Caco-2 (cell line): ENCODE measurements at regions of chr2 and their contacts with region 1.

Region 1: GRCh38 chr2:19667085-19667484 is 234.7 kb downstream of the TTC32 start:
- DNase-seq: peak in 1 of 2 experiments; percentile 18
- H3K4me3 ChIP-seq: no peak overlapping the region
- H3K4me3 Mint-ChIP-seq: no peak overlapping the region
- H3K27ac Mint-ChIP-seq: no peak overlapping the region
- H3K4me1 ChIP-seq: no peaks in the 10 kb centered on the region
- H3K4me1 Mint-ChIP-seq: no peaks in the 10 kb centered on the region
- H3K27me3 ChIP-seq: no peaks in the 10 kb centered on the region
- H3K27me3 Mint-ChIP-seq: no peaks in the 10 kb centered on the region
- CTCF ChIP-seq: peak; percentile 20 to 24

Region 2: GRCh38 chr2:19369341-19369955 is 297.6 kb before region 1 on chr2:
- CTCF ChIA-PET with region 1: interaction called, 3 read pairs
- POLR2A ChIA-PET with region 1: interaction called, 3 read pairs
- intact Hi-C with region 1: loop called (anchors 1 kb)
- DNase-seq: no peak
- H3K4me3 ChIP-seq: no peak overlapping the region
- H3K4me3 Mint-ChIP-seq: no peak overlapping the region
- H3K27ac Mint-ChIP-seq: no peak overlapping the region
- H3K4me1 ChIP-seq: no peaks in the 10 kb centered on the region
- H3K4me1 Mint-ChIP-seq: no peaks in the 10 kb centered on the region
- H3K27me3 ChIP-seq: no peaks in the 10 kb centered on the region
- H3K27me3 Mint-ChIP-seq: peaks cover 21% of the 10 kb centered on the region
- CTCF ChIP-seq: peak in 1 of 2 experiments; percentile 12

Region 3: DNA sequence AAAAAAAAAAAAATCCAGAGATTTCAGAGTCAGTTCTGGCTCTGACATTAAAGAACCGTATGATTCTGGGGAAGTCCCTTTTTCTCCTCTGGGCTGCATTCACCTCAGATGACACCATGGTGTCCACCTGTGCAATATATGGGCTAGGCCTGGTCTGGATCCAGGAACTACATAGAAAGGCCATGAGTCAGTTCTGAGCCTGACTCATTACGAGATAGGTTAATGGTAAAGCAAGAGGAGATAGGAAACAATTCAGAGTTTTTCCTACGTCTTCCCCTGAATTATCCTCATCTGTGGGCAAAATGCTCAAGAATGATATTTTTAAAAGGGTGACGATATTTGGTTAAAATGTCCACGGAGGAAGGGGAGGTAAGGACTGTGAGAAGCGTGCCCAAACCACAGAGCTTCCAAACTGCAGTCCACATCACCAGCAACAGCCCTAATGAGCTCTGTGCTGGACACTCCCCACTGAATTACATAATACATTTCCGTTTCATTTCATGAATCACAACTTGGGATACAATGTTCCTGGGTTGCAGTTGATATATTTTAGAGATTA is 128.6 kb before region 1 on chr2:
- CTCF ChIA-PET with region 1: interaction called, 3 read pairs
- POLR2A ChIA-PET with region 1: no interaction called
- intact Hi-C with region 1: loop called (anchors 5 kb)
- DNase-seq: peak; percentile 14 to 47
- H3K4me3 ChIP-seq: no peak overlapping the region
- H3K4me3 Mint-ChIP-seq: no peak overlapping the region
- H3K27ac Mint-ChIP-seq: no peak overlapping the region
- H3K4me1 ChIP-seq: peaks cover 6% of the 10 kb centered on the region; the same call in 1 of the 2 replicates
- H3K4me1 Mint-ChIP-seq: no peaks in the 10 kb centered on the region
- H3K27me3 ChIP-seq: no peaks in the 10 kb centered on the region
- H3K27me3 Mint-ChIP-seq: no peaks in the 10 kb centered on the region
- CTCF ChIP-seq: no peak

Region 4: DNA sequence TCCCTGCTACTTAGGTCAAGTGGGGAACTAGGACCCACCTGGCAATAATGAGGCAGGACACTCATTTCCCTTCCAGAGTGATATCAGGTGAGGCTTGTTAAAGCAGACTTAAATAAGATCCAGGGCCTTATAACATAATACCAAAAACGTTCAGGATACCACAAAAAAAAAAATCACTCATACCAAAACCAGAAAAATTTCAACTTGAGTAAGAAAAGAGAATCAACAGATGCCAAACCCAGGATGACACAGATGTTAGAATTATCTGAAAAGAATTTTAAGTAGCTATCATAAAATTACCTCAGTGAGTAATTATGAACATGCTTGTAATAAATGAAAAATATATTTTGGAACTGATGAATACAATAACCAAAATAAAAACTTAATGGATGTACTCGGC is 53.0 kb before region 1 on chr2:
- CTCF ChIA-PET with region 1: no interaction called
- POLR2A ChIA-PET with region 1: no interaction called
- intact Hi-C with region 1: no loop called
- DNase-seq: no peak
- H3K4me3 ChIP-seq: no peak overlapping the region
- H3K4me3 Mint-ChIP-seq: no peak overlapping the region
- H3K27ac Mint-ChIP-seq: no peak overlapping the region
- H3K4me1 ChIP-seq: peaks cover 7% of the 10 kb centered on the region
- H3K4me1 Mint-ChIP-seq: no peaks in the 10 kb centered on the region
- H3K27me3 ChIP-seq: no peaks in the 10 kb centered on the region
- H3K27me3 Mint-ChIP-seq: no peaks in the 10 kb centered on the region
- CTCF ChIP-seq: no peak

Region 5: DNA sequence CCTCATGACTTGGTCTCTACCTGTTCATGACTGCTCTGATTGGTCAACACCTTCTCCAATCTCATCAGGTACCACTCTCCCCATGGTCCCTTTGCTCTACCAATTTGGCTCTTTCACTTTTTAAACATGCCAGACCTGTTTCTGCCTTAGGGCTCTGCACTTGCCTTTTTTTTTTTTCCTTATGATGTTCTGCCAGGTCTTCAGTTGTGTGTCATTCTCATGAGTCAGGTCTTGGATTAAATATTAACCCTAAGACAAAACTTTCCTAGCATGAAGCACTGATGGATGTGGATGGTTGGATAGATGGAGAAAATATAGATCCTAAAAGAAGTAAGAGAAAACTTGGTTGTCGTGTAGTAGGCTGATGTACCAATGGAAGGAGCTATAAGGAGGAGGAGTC is 15.4 kb after region 1 on chr2:
- CTCF ChIA-PET with region 1: no interaction called
- POLR2A ChIA-PET with region 1: no interaction called
- intact Hi-C with region 1: no loop called
- DNase-seq: peak in 1 of 2 experiments; percentile 29
- H3K4me3 ChIP-seq: no peak overlapping the region
- H3K4me3 Mint-ChIP-seq: no peak overlapping the region
- H3K27ac Mint-ChIP-seq: no peak overlapping the region
- H3K4me1 ChIP-seq: peaks cover 6% of the 10 kb centered on the region; the same call in 1 of the 2 replicates
- H3K4me1 Mint-ChIP-seq: no peaks in the 10 kb centered on the region
- H3K27me3 ChIP-seq: no peaks in the 10 kb centered on the region
- H3K27me3 Mint-ChIP-seq: peaks cover 3% of the 10 kb centered on the region
- CTCF ChIP-seq: no peak